ENCODE measurements at regions of chr16 and their contacts with region 1.

Region 1: DNA sequence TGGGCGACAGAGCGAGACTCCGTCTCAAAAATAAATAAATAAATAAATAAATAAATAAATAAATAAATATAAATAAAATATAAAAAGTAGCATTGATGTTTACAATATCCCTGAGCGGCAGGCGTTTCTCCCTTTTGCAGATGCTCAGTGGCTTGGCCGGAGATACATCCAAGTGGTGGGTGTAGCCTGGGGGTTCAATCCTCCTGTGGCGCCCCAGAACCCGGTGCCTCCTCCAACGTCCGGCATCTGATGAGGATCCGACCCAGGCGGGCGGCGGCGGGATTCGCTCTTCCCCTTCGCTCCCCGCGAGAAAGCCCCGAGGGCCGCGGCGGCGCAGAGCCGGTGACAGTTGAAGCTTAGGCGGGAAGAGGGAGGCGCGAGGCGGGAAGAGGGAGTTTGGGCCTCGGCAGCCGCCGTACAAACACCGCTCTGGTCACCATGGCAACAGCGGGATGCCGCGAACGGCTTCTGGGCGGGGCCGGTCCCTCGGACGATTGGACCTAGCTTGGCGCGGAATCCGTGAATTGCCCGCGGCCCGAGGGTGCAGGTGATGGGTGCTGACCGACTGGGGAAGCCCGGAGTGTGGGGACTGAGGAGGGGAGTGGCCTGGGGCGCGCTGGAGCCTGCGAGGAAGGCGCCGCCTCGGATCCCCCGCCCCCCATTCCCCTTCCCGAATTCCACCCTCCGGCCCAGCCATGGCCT is 12.7 kb upstream of the ALDOA start:
- DNase-seq: peak; percentile 69 to 93 (median 90)
- ATAC-seq: peak; percentile 86
- H3K4me3 ChIP-seq: peak overlapping the region; percentile 55 to 74
- H3K4me3 Mint-ChIP-seq: peak overlapping the region; percentile 84
- H3K27ac ChIP-seq: no peak overlapping the region
- H3K27ac Mint-ChIP-seq: no peak overlapping the region
- H3K4me1 ChIP-seq: peaks cover 6% of the 10 kb centered on the region
- H3K4me1 Mint-ChIP-seq: peaks cover 17% of the 10 kb centered on the region
- H3K27me3 ChIP-seq: no peaks in the 10 kb centered on the region
- H3K27me3 Mint-ChIP-seq: no peaks in the 10 kb centered on the region
- CTCF ChIP-seq: no peak

Region 2: DNA sequence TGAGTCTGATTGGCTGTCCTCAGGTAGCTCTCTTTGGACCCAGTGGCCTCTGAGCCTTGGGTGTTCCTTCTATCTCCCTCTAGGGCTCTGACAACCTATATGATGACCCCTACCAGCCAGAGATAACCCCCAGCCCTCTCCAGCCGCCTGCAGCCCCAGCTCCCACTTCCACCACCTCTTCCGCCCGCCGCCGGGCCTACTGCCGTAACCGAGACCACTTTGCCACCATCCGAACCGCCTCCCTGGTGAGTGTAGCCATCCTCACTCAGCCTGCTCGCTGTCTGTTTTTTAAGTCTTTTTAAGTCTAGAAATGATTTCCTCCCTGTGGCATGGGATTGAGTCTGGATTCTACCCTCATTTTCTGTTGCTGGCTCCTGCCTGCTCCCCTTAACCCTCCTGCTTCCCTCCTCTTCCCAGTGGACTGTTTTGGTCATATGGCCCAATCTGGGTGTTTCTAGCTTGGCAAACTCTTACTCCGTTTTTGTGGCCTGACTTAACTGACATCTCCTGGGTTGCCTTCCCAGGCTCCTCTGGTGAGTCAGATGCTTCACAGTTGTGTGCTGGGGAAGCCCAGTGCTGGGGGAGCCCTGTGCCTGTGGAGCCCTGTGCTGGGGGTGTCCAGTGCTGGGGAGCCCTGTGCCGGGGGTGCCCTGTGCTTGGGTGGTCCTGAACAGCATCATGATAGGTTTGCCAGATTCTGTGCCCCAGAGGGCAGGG is 69.2 kb before region 1 on chr16:
- CTCF ChIA-PET with region 1: no interaction called
- POLR2A ChIA-PET with region 1: no interaction called
- intact Hi-C with region 1: no loop called
- DNase-seq: no peak
- ATAC-seq: no peak
- H3K4me3 ChIP-seq: no peak overlapping the region
- H3K4me3 Mint-ChIP-seq: no peak overlapping the region
- H3K27ac ChIP-seq: no peak overlapping the region
- H3K27ac Mint-ChIP-seq: no peak overlapping the region
- H3K4me1 ChIP-seq: no peaks in the 10 kb centered on the region
- H3K4me1 Mint-ChIP-seq: no peaks in the 10 kb centered on the region
- H3K27me3 ChIP-seq: no peaks in the 10 kb centered on the region
- H3K27me3 Mint-ChIP-seq: no peaks in the 10 kb centered on the region
- CTCF ChIP-seq: no peak

Region 3: GRCh38 chr16:30032083-30032819 is 20.6 kb before region 1 on chr16:
- CTCF ChIA-PET with region 1: interaction called, 15 read pairs
- POLR2A ChIA-PET with region 1: no interaction called
- intact Hi-C with region 1: no loop called
- DNase-seq: peak; percentile 30 to 78 (median 61)
- ATAC-seq: peak; percentile 79
- H3K4me3 ChIP-seq: no peak overlapping the region
- H3K4me3 Mint-ChIP-seq: no peak overlapping the region
- H3K27ac ChIP-seq: no peak overlapping the region
- H3K27ac Mint-ChIP-seq: no peak overlapping the region
- H3K4me1 ChIP-seq: peaks cover 11% of the 10 kb centered on the region
- H3K4me1 Mint-ChIP-seq: peaks cover 12% of the 10 kb centered on the region
- H3K27me3 ChIP-seq: peaks cover 15 to 43% of the 10 kb centered on the region in 2 experiments
- H3K27me3 Mint-ChIP-seq: peaks cover 50% of the 10 kb centered on the region
- CTCF ChIP-seq: peak; percentile 66

Region 4: DNA sequence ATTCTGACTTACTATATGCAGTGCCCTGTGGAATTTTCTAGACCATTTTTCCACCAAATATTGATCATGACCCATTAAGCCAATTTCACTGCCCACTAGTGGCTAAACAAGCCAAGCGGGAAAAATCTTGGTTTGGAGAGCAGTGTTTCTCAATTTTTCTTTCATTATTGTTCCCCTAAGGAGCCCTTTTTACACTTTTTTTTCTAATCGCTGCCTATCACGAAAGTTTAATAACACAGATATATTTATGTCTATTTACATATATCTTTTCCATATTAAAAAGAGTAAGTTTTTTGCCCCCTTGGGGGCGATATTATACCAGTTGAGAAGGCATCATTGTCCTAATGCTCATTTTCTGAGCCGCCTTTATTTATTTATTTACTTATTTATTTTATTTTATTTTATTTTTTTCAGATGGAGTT is 11.0 kb before region 1 on chr16:
- CTCF ChIA-PET with region 1: interaction called, 20 read pairs
- POLR2A ChIA-PET with region 1: no interaction called
- intact Hi-C with region 1: no loop called
- DNase-seq: peak in 2 of 9 experiments; percentile 43 to 52
- ATAC-seq: no peak
- H3K4me3 ChIP-seq: no peak overlapping the region
- H3K4me3 Mint-ChIP-seq: no peak overlapping the region
- H3K27ac ChIP-seq: no peak overlapping the region
- H3K27ac Mint-ChIP-seq: no peak overlapping the region
- H3K4me1 ChIP-seq: no peaks in the 10 kb centered on the region
- H3K4me1 Mint-ChIP-seq: no peaks in the 10 kb centered on the region
- H3K27me3 ChIP-seq: peaks cover 0 to 3% of the 10 kb centered on the region in 2 experiments
- H3K27me3 Mint-ChIP-seq: peaks cover 3% of the 10 kb centered on the region
- CTCF ChIP-seq: peak; percentile 52

Region 5: DNA sequence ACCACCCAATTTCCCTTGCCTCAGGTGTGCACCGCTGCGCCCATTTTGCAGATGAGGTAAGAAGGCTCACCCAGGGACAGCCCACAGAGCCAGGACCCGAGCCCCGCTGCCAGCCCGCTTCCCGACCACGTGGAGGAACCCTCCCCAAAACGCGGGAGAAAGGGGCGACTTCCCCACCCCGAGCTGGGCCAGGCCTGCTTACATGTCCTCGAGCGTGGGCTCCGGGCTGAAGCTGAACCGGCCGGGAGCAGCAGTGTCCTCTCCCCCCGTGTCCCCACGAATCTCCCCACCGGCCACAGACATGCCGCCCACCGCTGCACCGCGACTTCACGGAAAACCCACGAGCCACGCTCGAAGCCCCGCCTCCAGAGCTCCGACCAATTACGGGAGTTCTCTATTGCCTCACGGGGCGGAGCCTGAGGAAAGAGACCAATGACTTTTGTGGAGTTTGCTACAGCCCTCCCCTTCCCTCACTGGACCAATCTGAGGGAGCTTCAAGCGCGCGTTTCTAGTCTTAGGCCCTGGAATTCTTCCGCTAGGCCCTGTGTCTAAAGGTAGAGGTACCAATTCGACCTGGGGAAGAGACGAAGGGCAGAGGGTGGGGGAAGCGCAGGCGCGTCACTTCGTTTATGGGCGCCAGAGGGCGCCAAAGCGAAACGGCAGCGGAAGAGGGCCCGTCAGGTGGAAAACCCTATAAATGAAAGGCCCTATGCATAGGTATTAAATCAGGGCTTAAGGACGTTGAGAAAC is 377.0 kb after region 1 on chr16 and contains the start of gene DCTPP1:
- CTCF ChIA-PET with region 1: no interaction called
- POLR2A ChIA-PET with region 1: no interaction called
- intact Hi-C with region 1: no loop called
- DNase-seq: peak; percentile 89 to 100 (median 95)
- ATAC-seq: peak; percentile 96
- H3K4me3 ChIP-seq: peak within 1 kb of the TSS; percentile 62 to 71
- H3K4me3 Mint-ChIP-seq: no peak within 1 kb of the TSS
- H3K27ac ChIP-seq: peak within 1 kb of the TSS; percentile 60 to 72
- H3K27ac Mint-ChIP-seq: no peak within 1 kb of the TSS
- H3K4me1 ChIP-seq: peaks cover 18% of the 10 kb centered on the region
- H3K4me1 Mint-ChIP-seq: peaks cover 19% of the 10 kb centered on the region
- H3K27me3 ChIP-seq: no peaks in the 10 kb centered on the region
- H3K27me3 Mint-ChIP-seq: no peaks in the 10 kb centered on the region
- CTCF ChIP-seq: peak; percentile 63
- total RNA-seq, gene DCTPP1: 4.0 to 5.5 TPM